Mammary epithelial cell (primary cell): ENCODE measurements at regions of chr20 and their contacts with region 1.

Region 1: DNA sequence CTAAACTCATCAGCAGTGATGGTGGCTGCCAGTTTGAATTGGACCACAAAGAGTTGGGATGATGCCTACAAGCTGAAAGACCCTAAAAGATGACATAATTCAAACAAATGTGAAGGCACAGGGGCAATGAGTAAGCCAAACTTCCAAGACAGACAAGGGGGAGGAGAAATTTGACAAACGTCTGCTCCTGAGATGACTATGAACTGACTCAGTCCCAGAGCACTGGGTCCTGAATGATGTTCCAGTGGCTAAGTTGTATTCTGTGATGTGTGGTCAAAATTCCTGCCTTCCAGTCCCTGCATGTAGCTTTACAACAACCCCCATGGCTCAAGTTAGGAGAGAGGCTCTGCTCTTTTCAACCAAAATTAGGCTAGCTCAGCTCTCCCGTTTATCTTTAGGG is 86.1 kb upstream of the SIRPA start:
- DNase-seq: peak; percentile 96
- H3K4me3 ChIP-seq: no peak overlapping the region
- H3K27ac ChIP-seq: peak overlapping the region; percentile 87
- H3K4me1 ChIP-seq: peaks cover 81% of the 10 kb centered on the region
- H3K27me3 ChIP-seq: no peaks in the 10 kb centered on the region
- CTCF ChIP-seq: no peak

Region 2: GRCh38 chr20:1830240-1830639 is 21.1 kb after region 1 on chr20:
- CTCF ChIA-PET with region 1: no interaction called
- dilution Hi-C with region 1: no loop called
- in situ Hi-C with region 1: no loop called
- intact Hi-C with region 1: loop called (anchors 1 kb)
- DNase-seq: peak; percentile 99
- H3K4me3 ChIP-seq: no peak overlapping the region
- H3K27ac ChIP-seq: peak overlapping the region; percentile 94
- H3K4me1 ChIP-seq: peaks cover 46% of the 10 kb centered on the region
- H3K27me3 ChIP-seq: no peaks in the 10 kb centered on the region
- CTCF ChIP-seq: no peak

Region 3: DNA sequence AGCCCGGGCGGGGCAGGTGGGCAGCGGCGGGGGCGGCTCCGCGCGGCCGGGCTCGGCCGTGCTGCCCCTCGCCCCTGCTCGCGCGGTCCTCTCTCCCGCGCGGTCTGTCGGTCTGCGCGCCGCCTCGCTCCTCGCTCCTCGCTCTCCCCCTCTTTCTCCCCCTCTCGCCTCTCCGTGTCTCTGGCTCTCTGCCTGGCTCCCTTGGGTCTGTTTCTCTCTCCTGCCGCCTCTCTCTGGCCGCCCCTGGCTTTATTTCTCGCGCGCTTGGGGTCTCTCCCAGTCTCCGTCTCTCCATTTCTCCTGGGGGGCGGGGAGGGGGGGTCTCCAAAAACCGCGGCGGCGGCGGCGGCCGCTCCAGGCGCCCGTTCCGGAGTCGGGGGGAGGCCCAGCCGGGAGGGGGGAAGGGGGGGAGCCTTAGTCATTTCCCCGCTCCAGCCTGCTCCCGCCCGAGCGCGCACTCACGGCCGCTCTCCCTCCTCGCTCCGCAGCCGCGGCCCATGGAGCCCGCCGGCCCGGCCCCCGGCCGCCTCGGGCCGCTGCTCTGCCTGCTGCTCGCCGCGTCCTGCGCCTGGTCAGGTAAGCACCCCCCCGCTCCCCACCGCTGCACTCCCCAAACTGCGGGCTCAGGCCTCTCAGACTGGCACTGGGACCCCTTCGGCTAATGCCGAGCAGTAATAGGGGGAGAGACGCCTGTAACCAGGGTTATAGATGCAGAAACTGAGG is 86.0 kb after region 1 on chr20 and contains the start of gene SIRPA:
- CTCF ChIA-PET with region 1: interaction called, 3 read pairs
- dilution Hi-C with region 1: loop called (anchors 5 kb)
- in situ Hi-C with region 1: no loop called
- intact Hi-C with region 1: loop called (anchors 2 kb)
- DNase-seq: peak; percentile 67
- H3K4me3 ChIP-seq: peak within 1 kb of the TSS; percentile 68 to 85 (median 81)
- H3K27ac ChIP-seq: peak within 1 kb of the TSS; percentile 75
- H3K4me1 ChIP-seq: peaks cover 37% of the 10 kb centered on the region
- H3K27me3 ChIP-seq: no peaks in the 10 kb centered on the region
- CTCF ChIP-seq: no peak
- total RNA-seq, gene SIRPA: 49.6 to 68.3 TPM

Region 4: DNA sequence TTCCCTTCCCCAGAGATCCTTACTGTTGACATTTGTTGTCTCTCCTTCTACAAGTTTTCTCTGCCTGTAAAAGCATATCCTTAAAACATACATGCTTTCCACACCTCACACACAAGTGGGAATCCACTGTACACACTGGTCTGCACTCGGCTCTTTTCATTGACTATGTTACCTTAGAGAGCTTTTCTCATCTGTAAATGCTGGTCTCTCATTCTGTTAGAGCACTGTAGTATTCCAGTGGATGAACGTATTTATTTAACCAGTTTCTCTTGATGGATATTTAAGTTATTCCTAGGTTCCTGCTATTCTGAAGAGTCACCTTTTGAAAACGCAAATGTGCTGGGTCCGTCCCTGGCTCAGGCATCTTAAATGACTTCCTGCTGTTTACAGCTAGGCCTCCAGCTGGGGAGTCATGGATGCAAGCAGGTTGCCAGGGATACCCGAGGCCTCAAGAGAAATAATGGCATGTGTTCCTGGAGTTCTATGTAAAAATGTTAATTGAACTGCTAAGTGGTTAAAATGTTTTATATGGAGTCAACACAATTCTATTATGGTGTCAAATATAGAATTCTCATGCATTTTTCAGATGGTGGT is 425.6 kb after region 1 on chr20:
- CTCF ChIA-PET with region 1: no interaction called
- dilution Hi-C with region 1: no loop called
- in situ Hi-C with region 1: no loop called
- intact Hi-C with region 1: no loop called
- DNase-seq: no peak
- H3K4me3 ChIP-seq: no peak overlapping the region
- H3K27ac ChIP-seq: no peak overlapping the region
- H3K4me1 ChIP-seq: peaks cover 14% of the 10 kb centered on the region
- H3K27me3 ChIP-seq: peaks cover 9% of the 10 kb centered on the region
- CTCF ChIP-seq: no peak